Posterior cingulate gyrus (tissue), 11 donors: ENCODE measurements at regions of chr7 and their contacts with region 1.

Region 1: DNA sequence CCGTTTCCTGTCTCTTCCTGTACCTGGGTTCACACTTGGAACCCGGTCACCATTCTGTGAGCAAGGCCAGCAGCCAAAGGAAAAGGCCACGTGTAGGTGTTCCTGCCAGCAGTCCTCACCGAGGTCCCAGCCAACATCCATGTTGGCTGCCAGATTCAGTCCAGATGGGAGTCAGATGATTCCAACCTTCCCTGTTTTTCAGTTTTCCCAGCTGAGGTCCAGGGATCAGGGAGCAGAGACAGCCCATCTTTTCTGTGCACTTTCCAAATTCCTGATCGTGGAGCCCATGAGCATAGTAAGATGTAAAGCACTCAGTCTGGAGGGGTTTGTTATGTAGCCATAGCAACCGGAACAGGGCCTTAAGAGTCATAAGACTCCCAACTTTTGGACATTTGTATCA is 3.9 kb upstream of the PVRIG start:
- DNase-seq: peak in 3 of 10 donors; percentile 30 to 64 (median 32)

Region 2: GRCh38 chr7:100132697-100133151 is 83.2 kb before region 1 on chr7:
- intact Hi-C with region 1: loop called (anchors 10 kb)
- DNase-seq: peak in 8 of 10 donors; percentile 25 to 94 (median 51)

Region 3: DNA sequence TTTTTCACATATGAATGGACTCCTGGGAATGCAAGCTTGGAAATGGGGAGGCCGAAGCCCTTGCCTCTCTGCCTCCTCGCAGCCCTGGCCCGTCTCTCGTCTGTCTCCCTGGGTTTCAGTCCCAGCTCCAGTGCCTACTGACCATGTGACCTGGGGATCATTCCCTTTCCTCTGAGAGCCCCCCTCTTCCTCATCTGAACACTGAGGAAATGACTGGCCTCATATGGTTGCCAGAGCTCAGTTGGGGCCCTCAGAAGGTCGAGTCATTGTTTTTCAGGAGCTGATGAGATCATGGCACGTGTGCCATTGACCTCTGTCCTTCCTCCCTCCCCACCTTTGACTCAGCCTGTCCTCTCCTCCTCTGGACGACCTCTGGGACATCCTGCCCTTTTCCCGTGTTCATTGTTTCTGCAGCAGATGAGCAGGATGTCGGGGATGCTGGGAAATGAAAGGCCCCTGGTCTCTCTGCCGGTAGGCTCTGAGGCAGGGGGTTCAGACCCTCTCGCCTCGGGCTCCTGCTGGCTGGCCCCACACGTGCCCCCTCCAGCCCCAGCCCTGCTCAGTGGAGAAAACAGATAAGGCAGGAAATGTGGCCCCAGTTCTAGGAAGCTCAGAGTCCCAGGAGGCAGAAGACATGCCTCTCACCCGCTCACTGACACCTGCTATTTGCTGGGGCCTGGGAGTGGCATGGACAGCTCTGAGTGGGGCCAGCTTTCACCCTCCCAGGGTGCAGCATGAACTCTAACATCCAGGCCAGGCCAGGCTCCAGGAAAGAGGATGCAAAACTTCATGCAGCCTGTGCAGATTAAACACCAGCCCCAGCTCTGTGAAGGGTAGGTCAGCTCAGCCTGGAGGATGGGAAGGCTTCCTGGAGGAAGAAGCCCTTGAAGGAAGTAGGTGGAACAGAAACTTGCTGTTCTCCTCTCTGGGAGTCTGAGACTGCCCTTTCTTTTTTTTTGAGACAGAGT is 228.7 kb after region 1 on chr7:
- intact Hi-C with region 1: no loop called
- DNase-seq: peak in 2 of 10 donors; percentile 40 to 50

Region 4: DNA sequence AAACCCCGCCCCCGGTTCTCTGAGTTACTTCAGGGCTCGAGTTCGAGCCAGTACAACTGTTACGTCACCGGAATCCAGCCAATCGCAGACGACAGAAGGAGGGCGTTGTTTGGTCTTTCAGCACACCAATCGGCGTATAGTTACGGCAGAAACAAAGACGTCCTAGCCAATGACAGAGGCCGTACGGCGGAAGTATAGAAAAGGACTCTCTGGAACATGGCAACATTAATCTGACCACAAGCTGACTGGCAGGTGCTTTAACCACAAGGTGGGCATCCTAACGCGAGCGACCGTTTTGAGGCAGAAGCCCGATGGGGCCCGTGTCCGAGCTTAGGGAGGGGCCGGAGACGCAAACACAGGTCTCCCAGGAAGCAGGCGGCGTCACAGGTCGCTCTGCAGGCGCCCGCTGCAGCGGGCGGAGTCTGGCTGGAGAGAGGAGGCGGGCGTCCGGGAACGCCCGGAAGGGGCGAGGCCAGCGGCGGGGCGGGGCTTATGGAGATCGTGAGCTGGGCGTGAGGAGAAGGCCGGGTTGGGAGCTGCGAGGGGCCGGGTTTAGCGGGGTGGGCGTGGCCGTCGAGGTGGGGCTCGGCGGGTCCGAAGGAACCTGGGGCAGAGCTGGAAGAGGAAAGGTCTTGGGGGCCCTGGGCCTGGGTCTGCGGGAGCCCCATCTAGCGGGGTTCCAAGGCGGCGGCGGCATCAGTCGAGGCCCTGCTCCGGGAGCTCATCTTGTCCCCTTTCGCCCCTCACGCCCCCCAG is 396.3 kb after region 1 on chr7 and contains the start of gene MOSPD3:
- intact Hi-C with region 1: no loop called
- DNase-seq: peak; percentile 97 to 100 (median 98)